ENCODE measurements at regions of chr3 and their contacts with region 1.

Region 1: GRCh38 chr3:106013971-106014370 is 145.2 kb upstream of the CBLB start:
- DNase-seq: no peak
- H3K4me3 Mint-ChIP-seq: no peak overlapping the region
- H3K27ac Mint-ChIP-seq: peak overlapping the region; percentile 30
- H3K4me1 Mint-ChIP-seq: peaks cover 41% of the 10 kb centered on the region
- H3K27me3 Mint-ChIP-seq: no peaks in the 10 kb centered on the region

Region 2: DNA sequence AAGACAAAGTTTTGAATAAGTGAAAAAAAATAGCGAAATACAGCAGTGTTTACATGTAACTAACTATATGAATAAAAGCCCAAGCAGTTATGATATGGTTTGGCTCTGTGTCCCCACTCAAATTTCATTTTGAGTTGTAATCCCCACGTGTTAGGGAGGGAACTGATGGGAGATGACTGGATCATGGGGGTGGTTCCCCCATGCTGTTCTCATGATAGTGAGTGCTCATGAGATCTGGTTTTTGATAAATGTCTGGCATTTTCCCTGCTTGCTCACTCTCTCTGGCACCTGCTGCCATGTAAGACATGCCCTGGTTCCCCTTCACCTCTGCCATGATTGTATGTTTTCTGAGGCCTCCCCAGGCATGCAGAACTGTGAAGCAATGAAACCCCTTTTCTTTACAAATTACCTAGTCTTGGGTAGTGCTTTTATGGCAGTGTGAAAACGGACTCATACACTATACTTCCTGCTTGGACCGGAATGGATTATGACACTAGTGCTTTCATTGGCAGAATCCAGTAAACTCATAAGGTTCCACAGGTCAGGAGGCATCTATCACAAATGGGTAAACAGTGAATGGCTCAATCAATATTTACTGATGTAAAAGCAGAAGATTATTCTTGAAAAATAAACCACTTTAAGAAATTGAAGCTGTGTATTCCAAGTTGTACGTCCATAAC is 337.2 kb before region 1 on chr3:
- CTCF ChIA-PET with region 1: no interaction called
- POLR2A ChIA-PET with region 1: no interaction called
- intact Hi-C with region 1: loop called (anchors 1 kb)
- DNase-seq: peak; percentile 77
- H3K4me3 Mint-ChIP-seq: no peak overlapping the region
- H3K27ac Mint-ChIP-seq: peak overlapping the region; percentile 86
- H3K4me1 Mint-ChIP-seq: peaks cover 9% of the 10 kb centered on the region
- H3K27me3 Mint-ChIP-seq: no peaks in the 10 kb centered on the region

Region 3: DNA sequence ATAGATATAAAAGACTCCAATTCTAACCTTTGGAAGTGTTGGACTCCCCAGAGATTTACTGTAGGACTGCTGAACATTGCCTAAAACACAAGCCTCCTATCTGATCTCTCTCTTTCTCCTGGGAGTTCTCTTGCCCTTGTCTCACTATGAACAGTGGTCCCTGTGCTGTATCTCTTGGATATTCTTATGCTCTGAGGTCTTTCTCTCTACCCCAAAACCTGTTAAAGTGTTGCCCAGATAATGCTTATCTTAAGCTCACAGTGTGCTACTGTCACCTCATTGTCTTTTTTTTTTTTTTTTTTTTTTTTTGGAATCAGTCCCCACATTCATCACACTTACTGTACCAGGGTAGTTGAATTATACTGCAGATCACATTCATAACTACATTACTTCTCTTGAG is 14.1 kb before region 1 on chr3:
- CTCF ChIA-PET with region 1: no interaction called
- POLR2A ChIA-PET with region 1: no interaction called
- intact Hi-C with region 1: no loop called
- DNase-seq: no peak
- H3K4me3 Mint-ChIP-seq: no peak overlapping the region
- H3K27ac Mint-ChIP-seq: no peak overlapping the region
- H3K4me1 Mint-ChIP-seq: peaks cover 14% of the 10 kb centered on the region
- H3K27me3 Mint-ChIP-seq: no peaks in the 10 kb centered on the region

Region 4: DNA sequence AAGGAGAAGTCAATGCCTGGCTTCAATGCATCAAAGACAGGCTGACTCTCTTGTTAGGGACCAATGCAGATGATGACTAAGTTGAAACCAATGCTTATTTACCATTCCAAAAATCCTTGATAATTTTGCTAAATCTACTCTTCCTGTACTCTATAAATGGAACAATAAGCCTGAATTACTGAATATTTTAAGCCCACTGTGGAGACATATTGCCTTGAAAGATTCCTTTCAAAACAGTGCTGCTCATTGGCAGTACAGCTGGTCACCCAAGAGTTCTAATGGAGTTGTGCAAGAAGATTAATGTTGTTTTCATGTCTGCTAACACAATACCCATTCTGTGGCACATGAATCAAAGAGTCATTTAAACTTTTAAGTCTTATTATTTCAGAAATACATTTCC is 35.9 kb after region 1 on chr3:
- CTCF ChIA-PET with region 1: no interaction called
- POLR2A ChIA-PET with region 1: no interaction called
- intact Hi-C with region 1: loop called (anchors 1 kb)
- DNase-seq: no peak
- H3K4me3 Mint-ChIP-seq: no peak overlapping the region
- H3K27ac Mint-ChIP-seq: peak overlapping the region; percentile 77
- H3K4me1 Mint-ChIP-seq: peaks cover 14% of the 10 kb centered on the region
- H3K27me3 Mint-ChIP-seq: no peaks in the 10 kb centered on the region

Region 5: DNA sequence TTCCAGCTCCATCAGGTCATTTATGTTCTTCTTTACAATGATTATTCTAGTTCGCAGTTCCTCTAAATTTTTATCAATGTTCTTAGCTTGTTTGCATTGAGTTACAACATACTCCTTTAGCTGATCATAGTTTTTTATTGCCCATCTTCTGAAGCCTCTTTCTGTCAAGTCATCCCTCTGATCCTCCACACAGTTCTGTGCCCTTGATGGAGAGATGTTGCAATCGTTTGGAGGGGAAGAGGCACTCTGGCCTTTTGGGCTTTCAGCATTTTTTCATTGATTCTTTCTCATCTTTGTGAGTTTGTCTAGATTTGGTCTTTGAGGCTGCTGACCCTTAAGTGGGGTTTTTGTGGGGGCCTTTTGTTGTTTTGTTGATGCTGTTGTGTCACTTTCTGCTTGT is 89.4 kb after region 1 on chr3:
- CTCF ChIA-PET with region 1: no interaction called
- POLR2A ChIA-PET with region 1: no interaction called
- intact Hi-C with region 1: no loop called
- DNase-seq: no peak
- H3K4me3 Mint-ChIP-seq: no peak overlapping the region
- H3K27ac Mint-ChIP-seq: no peak overlapping the region
- H3K4me1 Mint-ChIP-seq: no peaks in the 10 kb centered on the region
- H3K27me3 Mint-ChIP-seq: no peaks in the 10 kb centered on the region

Region 6: GRCh38 chr3:106119614-106120082 is 105.7 kb after region 1 on chr3:
- CTCF ChIA-PET with region 1: no interaction called
- POLR2A ChIA-PET with region 1: no interaction called
- intact Hi-C with region 1: loop called (anchors 2 kb)
- DNase-seq: peak; percentile 42
- H3K4me3 Mint-ChIP-seq: no peak overlapping the region
- H3K27ac Mint-ChIP-seq: peak overlapping the region; percentile 50
- H3K4me1 Mint-ChIP-seq: peaks cover 21% of the 10 kb centered on the region
- H3K27me3 Mint-ChIP-seq: no peaks in the 10 kb centered on the region

Region 7: GRCh38 chr3:106268696-106269095 is 254.7 kb after region 1 on chr3:
- CTCF ChIA-PET with region 1: no interaction called
- POLR2A ChIA-PET with region 1: no interaction called
- intact Hi-C with region 1: no loop called
- DNase-seq: no peak
- H3K4me3 Mint-ChIP-seq: no peak overlapping the region
- H3K27ac Mint-ChIP-seq: no peak overlapping the region
- H3K4me1 Mint-ChIP-seq: no peaks in the 10 kb centered on the region
- H3K27me3 Mint-ChIP-seq: no peaks in the 10 kb centered on the region

Region 8: GRCh38 chr3:106473576-106474475 is 459.9 kb after region 1 on chr3:
- CTCF ChIA-PET with region 1: no interaction called
- POLR2A ChIA-PET with region 1: no interaction called
- intact Hi-C with region 1: loop called (anchors 5 kb)
- DNase-seq: peak; percentile 53
- H3K4me3 Mint-ChIP-seq: no peak overlapping the region
- H3K27ac Mint-ChIP-seq: peak overlapping the region; percentile 71
- H3K4me1 Mint-ChIP-seq: peaks cover 19% of the 10 kb centered on the region
- H3K27me3 Mint-ChIP-seq: no peaks in the 10 kb centered on the region

Region 9: DNA sequence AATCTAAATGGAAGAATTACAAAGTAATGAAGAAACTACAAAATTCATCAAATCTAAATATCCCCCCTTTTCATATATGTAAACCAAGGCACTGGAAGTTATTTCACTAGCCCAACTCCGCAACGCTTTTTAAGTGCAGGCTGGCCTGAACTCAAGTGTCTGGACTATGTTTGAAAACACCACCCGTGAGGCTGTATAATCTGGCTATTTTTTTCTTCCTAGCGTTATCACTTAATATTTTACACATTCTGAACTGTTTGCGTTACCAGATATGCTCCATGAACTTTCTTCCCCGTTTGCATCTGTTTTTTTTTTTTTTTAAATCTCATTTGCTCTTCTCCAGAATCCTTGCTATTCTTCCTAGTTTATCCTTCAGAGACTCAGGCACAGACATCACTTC is 474.4 kb after region 1 on chr3:
- CTCF ChIA-PET with region 1: no interaction called
- POLR2A ChIA-PET with region 1: no interaction called
- intact Hi-C with region 1: no loop called
- DNase-seq: no peak
- H3K4me3 Mint-ChIP-seq: no peak overlapping the region
- H3K27ac Mint-ChIP-seq: no peak overlapping the region
- H3K4me1 Mint-ChIP-seq: no peaks in the 10 kb centered on the region
- H3K27me3 Mint-ChIP-seq: no peaks in the 10 kb centered on the region

Measured in activated CD4-positive, alpha-beta memory T cell treated with anti-CD3 and anti-CD28 coated beads for 36 hours (primary cell).